Mammary epithelial cell (primary cell): ENCODE measurements at regions of chr3 and their contacts with region 1.

Region 1: GRCh38 chr3:185353823-185354614 is 8.9 kb upstream of the MAP3K13 start:
- DNase-seq: peak; percentile 71
- H3K4me3 ChIP-seq: no peak overlapping the region
- H3K27ac ChIP-seq: no peak overlapping the region
- H3K4me1 ChIP-seq: no peaks in the 10 kb centered on the region
- H3K27me3 ChIP-seq: no peaks in the 10 kb centered on the region
- CTCF ChIP-seq: peak; percentile 58 to 82

Region 2: DNA sequence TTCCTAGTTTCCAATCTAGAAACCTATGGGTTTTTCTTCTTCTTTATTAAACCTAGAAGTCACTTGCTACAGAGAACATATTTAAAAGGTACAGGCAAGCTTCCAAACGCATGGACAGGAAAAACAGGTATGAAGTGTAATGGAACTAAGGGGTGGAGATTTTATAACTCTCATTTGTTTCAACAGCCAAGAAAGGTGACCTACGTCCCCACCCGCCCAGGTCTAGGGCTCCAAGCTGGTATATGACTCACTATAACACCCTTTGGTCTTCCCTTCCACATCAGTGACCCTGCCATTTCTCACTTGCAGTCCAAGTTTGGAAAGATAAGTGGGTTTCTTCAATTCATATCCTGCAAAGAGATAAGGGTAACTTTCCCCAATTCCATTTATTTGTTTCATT is 204.4 kb after region 1 on chr3:
- CTCF ChIA-PET with region 1: interaction called, 3 read pairs
- dilution Hi-C with region 1: no loop called
- in situ Hi-C with region 1: loop called in 1 of 2 experiments (anchors 25 kb)
- intact Hi-C with region 1: loop called (anchors 5 kb)
- DNase-seq: peak; percentile 68
- H3K4me3 ChIP-seq: no peak overlapping the region
- H3K27ac ChIP-seq: peak overlapping the region; percentile 38
- H3K4me1 ChIP-seq: peaks cover 9% of the 10 kb centered on the region
- H3K27me3 ChIP-seq: no peaks in the 10 kb centered on the region
- CTCF ChIP-seq: no peak